Activated CD8-positive, alpha-beta memory T cell treated with anti-CD3 and anti-CD28 coated beads, Interleukin-2, amount 10 ng/mL, durations not matched to agents 7 days and 5 days (primary cell): ENCODE measurements at regions of chr16 and their contacts with region 1.

Region 1: GRCh38 chr16:66740010-66740409 is 11.4 kb downstream of the DYNC1LI2 start:
- DNase-seq: peak; percentile 57
- ATAC-seq: peak; percentile 57
- H3K4me3 Mint-ChIP-seq: no peak overlapping the region
- H3K27ac Mint-ChIP-seq: no peak overlapping the region
- H3K4me1 Mint-ChIP-seq: peaks cover 27% of the 10 kb centered on the region
- H3K27me3 Mint-ChIP-seq: no peaks in the 10 kb centered on the region

Region 2: DNA sequence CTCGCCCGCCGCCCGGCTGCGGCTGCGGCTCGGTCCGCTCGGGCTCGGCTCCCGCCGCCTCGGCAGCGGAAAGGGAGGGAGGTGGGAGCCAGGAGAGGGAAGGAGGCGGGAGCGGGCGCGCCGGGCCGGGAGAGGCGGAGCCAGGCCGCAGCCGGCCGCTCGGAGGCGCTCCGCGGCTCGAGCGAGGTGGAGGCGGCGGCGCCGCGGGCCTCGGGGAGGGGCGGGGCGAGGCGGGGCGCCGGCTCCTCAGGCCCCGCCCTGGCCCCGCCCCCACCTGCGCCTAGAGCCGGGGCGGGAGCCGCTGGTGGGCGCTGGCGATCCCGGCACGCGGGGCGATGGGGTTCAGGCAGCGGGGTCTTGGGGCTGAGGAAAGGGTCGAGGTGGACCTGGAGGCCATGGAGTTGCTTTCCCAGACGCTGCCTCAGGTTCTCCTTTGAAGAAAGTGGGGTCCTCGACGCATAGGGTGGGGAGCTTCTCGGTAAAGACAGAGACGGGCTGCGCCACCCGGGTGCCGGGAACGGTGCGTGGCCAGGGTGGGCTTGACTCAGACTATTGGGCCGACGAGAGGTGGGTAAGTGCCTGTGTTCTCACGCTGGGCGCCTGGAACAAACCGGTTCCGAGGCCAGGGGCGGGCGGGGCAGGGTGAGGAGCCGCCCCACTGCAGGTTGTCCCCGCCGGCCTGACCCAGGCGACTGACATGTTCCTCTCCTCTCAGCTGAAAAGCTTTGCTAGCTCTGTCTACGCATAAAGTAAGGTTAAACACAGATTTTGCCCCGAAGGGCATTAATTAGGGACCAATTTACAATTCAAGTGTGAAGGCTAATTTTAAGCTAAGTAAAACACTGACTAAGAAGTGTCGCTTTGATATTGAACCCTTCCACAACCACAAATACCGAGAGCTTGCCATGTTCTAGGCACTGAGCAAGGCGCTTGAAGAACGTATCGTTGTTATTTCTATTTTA is 43.1 kb before region 1 on chr16 and contains the start of gene CMTM4:
- CTCF ChIA-PET with region 1: interaction called, 13 read pairs
- DNase-seq: peak; percentile 70
- ATAC-seq: peak; percentile 94
- H3K4me3 Mint-ChIP-seq: peak within 1 kb of the TSS; percentile 73
- H3K27ac Mint-ChIP-seq: no peak within 1 kb of the TSS
- H3K4me1 Mint-ChIP-seq: peaks cover 15% of the 10 kb centered on the region
- H3K27me3 Mint-ChIP-seq: peaks cover 47% of the 10 kb centered on the region
- total RNA-seq, gene CMTM4: 1.1 to 1.2 TPM

Region 3: GRCh38 chr16:66728117-66728787 is 11.8 kb before region 1 on chr16:
- CTCF ChIA-PET with region 1: interaction called, 84 read pairs
- DNase-seq: no peak
- ATAC-seq: peak; percentile 85
- H3K4me3 Mint-ChIP-seq: no peak overlapping the region
- H3K27ac Mint-ChIP-seq: peak overlapping the region; percentile 42
- H3K4me1 Mint-ChIP-seq: peaks cover 17% of the 10 kb centered on the region
- H3K27me3 Mint-ChIP-seq: no peaks in the 10 kb centered on the region

Region 4: GRCh38 chr16:66751303-66751991 is 11.4 kb after region 1 on chr16 and contains the start of gene DYNC1LI2:
- CTCF ChIA-PET with region 1: interaction called, 45 read pairs
- DNase-seq: peak; percentile 86
- ATAC-seq: peak; percentile 87
- H3K4me3 Mint-ChIP-seq: peak within 1 kb of the TSS; percentile 85
- H3K27ac Mint-ChIP-seq: peak within 1 kb of the TSS; percentile 86
- H3K4me1 Mint-ChIP-seq: peaks cover 46% of the 10 kb centered on the region
- H3K27me3 Mint-ChIP-seq: peaks cover 24% of the 10 kb centered on the region
- total RNA-seq, gene DYNC1LI2: 71.6 to 81.0 TPM